ENCODE measurements at regions of chr2 and their contacts with region 1.

Region 1: GRCh38 chr2:69559442-69560146 is 83.9 kb downstream of the AAK1 start:
- DNase-seq: peak; percentile 61
- CTCF ChIP-seq: peak; percentile 64

Region 2: GRCh38 chr2:69604026-69604678 is 44.6 kb after region 1 on chr2:
- in situ Hi-C with region 1: no loop called
- DNase-seq: no peak
- CTCF ChIP-seq: no peak

Region 3: DNA sequence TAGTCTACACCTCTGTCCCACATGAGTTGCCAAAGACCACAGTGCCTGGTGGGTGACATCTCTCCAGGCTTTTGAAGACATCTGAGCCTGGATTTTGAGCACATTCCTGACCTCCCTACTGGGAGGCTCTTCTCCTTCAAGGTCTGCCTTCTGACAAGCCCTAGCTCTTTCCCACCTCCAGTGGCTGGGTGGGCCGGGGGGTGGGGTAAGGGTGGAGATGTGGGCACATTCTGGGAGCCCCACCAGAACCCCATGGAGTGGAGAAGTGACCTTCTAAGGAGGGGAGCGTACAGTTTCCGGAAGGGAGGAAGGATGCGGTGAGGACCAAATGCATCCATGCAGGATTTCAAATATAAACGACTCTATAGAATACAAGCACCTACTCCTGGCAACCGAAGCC is 154.4 kb after region 1 on chr2:
- in situ Hi-C with region 1: loop called (anchors 5 kb)
- DNase-seq: no peak
- CTCF ChIP-seq: no peak

Measured in GM13976 (cell line).